Activated CD4-positive, alpha-beta memory T cell treated with anti-CD3 and anti-CD28 coated beads for 36 hours (primary cell): ENCODE measurements at regions of chr3 and their contacts with region 1.

Region 1: DNA sequence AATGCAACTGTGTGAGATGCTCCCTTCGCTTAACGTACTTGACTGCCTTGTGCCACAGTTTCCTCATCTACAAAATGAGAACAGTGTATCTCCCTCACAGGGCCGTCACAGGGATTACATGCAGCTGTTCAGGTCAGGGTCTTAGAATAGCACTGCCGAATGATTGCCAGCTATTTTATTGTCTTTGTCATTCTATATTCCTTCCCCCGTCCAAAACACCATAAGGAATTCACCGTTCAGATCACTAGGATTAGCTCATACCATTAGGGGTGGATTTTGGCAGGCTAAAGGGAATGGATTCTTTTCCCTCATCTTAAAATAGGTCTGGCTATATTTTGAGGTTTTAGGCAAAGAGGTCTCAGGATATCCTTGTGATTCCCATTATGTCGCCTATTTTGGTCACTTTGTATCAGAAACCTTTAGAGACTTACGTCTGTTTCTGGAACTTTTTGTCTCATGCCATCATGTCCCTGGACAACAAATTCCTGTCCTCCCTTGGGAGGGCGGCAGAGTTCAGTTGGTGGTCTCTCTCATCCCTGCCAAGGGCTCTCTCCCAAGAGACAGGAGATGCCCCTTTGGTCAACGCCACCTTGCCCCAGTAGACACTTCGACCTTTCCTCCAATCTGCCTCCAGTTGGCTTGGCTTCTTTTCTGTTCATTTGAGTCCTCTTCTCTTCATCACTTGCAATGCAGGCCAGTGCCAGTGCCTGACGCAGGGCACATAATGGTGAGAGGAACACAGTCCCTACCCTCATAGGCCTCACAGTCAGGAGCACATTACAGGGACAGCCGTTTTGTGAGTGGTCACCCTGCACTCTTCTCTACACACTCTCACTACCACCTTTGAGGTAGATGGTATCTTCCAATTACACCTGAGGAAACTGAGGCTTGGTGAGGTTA is 171.6 kb upstream of the BHLHE40 start:
- DNase-seq: no peak
- H3K4me3 Mint-ChIP-seq: peak overlapping the region; percentile 45
- H3K27ac Mint-ChIP-seq: peak overlapping the region; percentile 4
- H3K4me1 Mint-ChIP-seq: peaks cover 42% of the 10 kb centered on the region
- H3K27me3 Mint-ChIP-seq: no peaks in the 10 kb centered on the region

Region 2: GRCh38 chr3:4741404-4742307 is 66.0 kb before region 1 on chr3:
- CTCF ChIA-PET with region 1: no interaction called
- POLR2A ChIA-PET with region 1: interaction called, 12 read pairs
- intact Hi-C with region 1: loop called (anchors 2 kb)
- DNase-seq: peak; percentile 52
- H3K4me3 Mint-ChIP-seq: peak overlapping the region; percentile 3
- H3K27ac Mint-ChIP-seq: peak overlapping the region; percentile 85
- H3K4me1 Mint-ChIP-seq: peaks cover 51% of the 10 kb centered on the region
- H3K27me3 Mint-ChIP-seq: no peaks in the 10 kb centered on the region

Region 3: GRCh38 chr3:4776980-4777581 is 30.6 kb before region 1 on chr3:
- CTCF ChIA-PET with region 1: no interaction called
- POLR2A ChIA-PET with region 1: interaction called, 6 read pairs
- intact Hi-C with region 1: loop called (anchors 1 kb)
- DNase-seq: peak; percentile 45
- H3K4me3 Mint-ChIP-seq: peak overlapping the region; percentile 47
- H3K27ac Mint-ChIP-seq: peak overlapping the region; percentile 91
- H3K4me1 Mint-ChIP-seq: peaks cover 37% of the 10 kb centered on the region
- H3K27me3 Mint-ChIP-seq: no peaks in the 10 kb centered on the region

Region 4: DNA sequence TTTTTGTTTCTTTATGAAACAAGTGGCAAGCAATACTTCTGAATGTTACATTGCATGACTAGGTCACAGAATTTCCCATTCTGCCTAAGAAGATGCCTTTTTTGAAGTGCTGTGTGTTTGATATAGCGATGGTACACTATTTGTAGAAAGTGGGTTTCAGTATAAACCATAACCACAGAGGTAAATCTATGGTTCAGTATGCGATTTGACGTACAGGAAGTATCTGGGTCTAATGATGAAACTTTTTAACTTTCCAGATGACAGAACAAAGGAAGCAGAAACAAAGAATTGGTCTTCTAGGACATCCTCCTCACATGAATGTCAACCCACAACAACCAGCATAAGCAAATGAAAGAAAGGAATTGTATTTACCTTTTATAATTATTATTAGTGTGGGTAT is 38.3 kb after region 1 on chr3:
- CTCF ChIA-PET with region 1: interaction called, 5 read pairs
- POLR2A ChIA-PET with region 1: interaction called, 21 read pairs
- intact Hi-C with region 1: loop called (anchors 1 kb)
- DNase-seq: no peak
- H3K4me3 Mint-ChIP-seq: peak overlapping the region; percentile 14
- H3K27ac Mint-ChIP-seq: peak overlapping the region; percentile 83
- H3K4me1 Mint-ChIP-seq: peaks cover 96% of the 10 kb centered on the region
- H3K27me3 Mint-ChIP-seq: no peaks in the 10 kb centered on the region

Region 5: DNA sequence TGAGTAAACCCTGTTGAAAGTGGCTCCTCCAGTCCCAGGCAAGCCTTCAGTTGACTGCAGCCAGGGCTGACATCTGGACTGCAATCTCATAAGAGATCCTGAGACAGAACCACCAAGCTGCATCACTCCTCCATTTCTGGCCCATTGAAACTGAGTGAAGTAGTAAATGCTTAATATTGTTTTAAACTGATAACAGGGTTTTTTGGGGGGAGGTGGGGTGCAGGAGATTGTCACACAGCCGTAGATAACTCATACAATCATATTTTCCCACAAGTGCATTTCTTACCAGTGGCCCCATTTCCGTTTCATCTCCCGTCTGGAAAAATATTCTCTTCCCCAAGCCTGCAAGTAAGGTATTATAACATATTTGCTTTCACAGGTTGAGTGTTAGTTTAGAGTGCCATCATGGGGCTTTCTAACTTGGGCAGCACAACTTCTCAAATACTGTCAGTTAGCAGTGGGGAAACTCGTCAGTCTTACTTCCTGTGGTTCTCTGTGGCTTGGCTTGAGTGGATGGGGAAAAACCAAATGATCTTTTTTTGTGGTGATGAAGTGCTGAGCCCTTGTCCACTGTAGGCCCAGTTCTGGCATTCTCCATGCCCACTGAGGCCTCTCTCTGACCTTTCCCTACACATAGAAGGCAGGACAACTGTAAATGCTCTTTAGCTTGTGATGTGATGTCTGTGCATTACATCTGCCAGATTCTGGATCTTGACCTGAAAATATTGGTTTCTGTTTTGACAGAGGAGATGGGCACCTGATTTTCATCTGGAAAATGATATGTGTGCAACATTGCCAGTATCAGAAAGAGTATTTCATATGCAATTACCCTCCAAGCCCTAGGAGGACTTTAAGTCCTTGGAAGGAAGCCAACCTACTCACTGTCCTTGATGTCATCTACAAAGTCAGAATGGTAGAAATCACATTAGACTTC is 81.5 kb after region 1 on chr3:
- CTCF ChIA-PET with region 1: no interaction called
- POLR2A ChIA-PET with region 1: no interaction called
- intact Hi-C with region 1: loop called (anchors 1 kb)
- DNase-seq: peak; percentile 67
- H3K4me3 Mint-ChIP-seq: no peak overlapping the region
- H3K27ac Mint-ChIP-seq: peak overlapping the region; percentile 90
- H3K4me1 Mint-ChIP-seq: peaks cover 31% of the 10 kb centered on the region
- H3K27me3 Mint-ChIP-seq: no peaks in the 10 kb centered on the region

Region 6: GRCh38 chr3:5162102-5162501 is 354.5 kb after region 1 on chr3:
- CTCF ChIA-PET with region 1: no interaction called
- POLR2A ChIA-PET with region 1: no interaction called
- intact Hi-C with region 1: no loop called
- DNase-seq: no peak
- H3K4me3 Mint-ChIP-seq: no peak overlapping the region
- H3K27ac Mint-ChIP-seq: no peak overlapping the region
- H3K4me1 Mint-ChIP-seq: peaks cover 73% of the 10 kb centered on the region
- H3K27me3 Mint-ChIP-seq: no peaks in the 10 kb centered on the region